ENCODE measurements at regions of chr17 and their contacts with region 1.

Region 1: GRCh38 chr17:40098846-40099618 is 1.4 kb downstream of the NR1D1 start:
- DNase-seq: peak; percentile 99
- ATAC-seq: peak; percentile 59
- H3K4me3 Mint-ChIP-seq: peak overlapping the region; percentile 88
- H3K27ac Mint-ChIP-seq: peak overlapping the region; percentile 90
- H3K4me1 Mint-ChIP-seq: peaks cover 86% of the 10 kb centered on the region
- H3K27me3 Mint-ChIP-seq: no peaks in the 10 kb centered on the region

Region 2: GRCh38 chr17:39461113-39461925 is 637.7 kb before region 1 on chr17 and contains the start of gene CDK12:
- CTCF ChIA-PET with region 1: no interaction called
- POLR2A ChIA-PET with region 1: no interaction called
- intact Hi-C with region 1: loop called in 1 of 2 experiments (anchors 1 kb)
- DNase-seq: peak; percentile 97
- ATAC-seq: peak; percentile 91
- H3K4me3 Mint-ChIP-seq: peak within 1 kb of the TSS; percentile 91
- H3K27ac Mint-ChIP-seq: peak within 1 kb of the TSS; percentile 94
- H3K4me1 Mint-ChIP-seq: peaks cover 22% of the 10 kb centered on the region
- H3K27me3 Mint-ChIP-seq: no peaks in the 10 kb centered on the region
- total RNA-seq, gene CDK12: 65.9 to 83.3 TPM

Region 3: DNA sequence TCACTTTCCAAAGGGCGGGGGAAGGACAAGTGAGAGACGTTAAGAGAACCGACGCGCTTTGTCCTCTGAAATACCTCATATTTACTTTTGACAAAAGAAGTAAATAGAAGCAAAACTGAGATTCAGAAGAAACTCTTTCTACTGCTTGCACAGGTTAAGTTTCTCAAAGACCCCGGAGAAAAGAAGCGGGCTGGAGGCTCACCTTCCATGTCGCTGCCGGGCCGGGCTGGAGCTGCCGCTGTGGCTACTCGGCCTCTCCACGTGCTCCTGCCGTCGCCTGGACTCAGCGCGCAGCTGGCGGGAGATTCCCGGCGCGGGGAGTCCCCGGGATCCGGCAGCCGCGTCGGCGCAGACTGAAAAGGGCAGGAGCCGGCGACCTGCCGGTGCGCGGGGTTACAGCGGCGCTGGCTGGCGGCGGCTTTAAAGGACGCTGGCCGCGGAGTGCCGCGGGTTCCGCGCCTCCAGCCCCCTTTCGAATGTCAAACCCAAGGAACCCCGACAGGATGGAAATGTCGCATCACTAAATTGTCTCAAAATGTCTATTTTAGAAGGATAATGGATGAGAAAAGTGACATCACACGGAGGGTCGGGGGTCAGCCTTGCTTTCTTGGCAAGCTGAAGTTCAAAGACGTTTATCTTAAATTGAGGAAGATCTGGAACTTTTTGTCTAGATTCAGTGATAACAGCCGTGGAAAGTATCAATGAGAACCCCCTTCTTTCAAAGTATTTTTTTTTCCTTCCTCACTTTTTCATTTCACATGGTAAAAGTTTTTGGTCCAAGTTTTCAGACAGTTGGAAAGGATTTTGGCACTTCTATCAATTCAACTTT is 234.9 kb before region 1 on chr17 and contains the start of gene IKZF3:
- CTCF ChIA-PET with region 1: no interaction called
- POLR2A ChIA-PET with region 1: no interaction called
- intact Hi-C with region 1: loop called in 1 of 2 experiments (anchors 1 kb)
- DNase-seq: peak; percentile 93
- ATAC-seq: peak; percentile 75
- H3K4me3 Mint-ChIP-seq: peak within 1 kb of the TSS; percentile 98
- H3K27ac Mint-ChIP-seq: peak within 1 kb of the TSS; percentile 97
- H3K4me1 Mint-ChIP-seq: peaks cover 67% of the 10 kb centered on the region
- H3K27me3 Mint-ChIP-seq: no peaks in the 10 kb centered on the region
- total RNA-seq, gene IKZF3: 37.6 to 50.4 TPM

Region 4: DNA sequence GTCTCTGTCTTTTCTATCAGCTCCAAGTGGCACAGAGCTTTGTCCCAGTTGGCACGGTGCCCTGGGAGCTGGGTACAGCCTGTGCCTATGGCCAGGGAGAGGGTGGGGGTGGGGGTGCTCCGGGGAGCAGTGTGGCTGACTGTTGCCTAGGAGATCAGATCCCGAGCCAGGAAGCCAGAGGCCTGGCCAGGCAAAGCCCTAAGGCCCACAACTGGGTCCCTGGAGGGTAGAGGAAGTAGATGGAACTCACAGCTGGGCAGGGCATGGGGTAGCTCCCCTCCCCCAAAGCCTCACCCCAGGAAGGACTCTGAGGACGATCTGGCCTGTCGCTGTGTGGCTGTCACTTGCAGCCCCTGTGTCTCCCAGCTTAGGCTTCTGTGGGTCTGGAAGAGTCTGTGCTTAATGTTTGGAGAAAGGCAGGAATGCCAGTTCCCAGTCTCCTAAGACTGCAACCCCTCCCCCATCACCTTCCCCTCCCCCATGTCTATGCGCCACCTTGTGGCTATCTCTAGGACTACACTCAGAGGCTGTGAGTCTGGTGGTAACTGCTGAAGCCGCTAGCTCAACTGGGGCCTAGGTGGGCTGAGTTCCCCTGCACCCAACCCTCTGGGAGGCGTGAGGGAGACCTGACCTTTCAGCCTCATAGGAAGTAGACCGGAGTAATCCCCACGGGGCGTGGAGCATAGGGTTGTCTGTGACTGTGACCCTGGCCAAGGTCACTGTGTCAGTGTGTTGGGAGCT is 23.7 kb before region 1 on chr17:
- CTCF ChIA-PET with region 1: interaction called, 13 read pairs
- POLR2A ChIA-PET with region 1: interaction called, 5 read pairs
- intact Hi-C with region 1: no loop called
- DNase-seq: peak; percentile 83
- ATAC-seq: peak; percentile 88
- H3K4me3 Mint-ChIP-seq: no peak overlapping the region
- H3K27ac Mint-ChIP-seq: peak overlapping the region; percentile 72
- H3K4me1 Mint-ChIP-seq: peaks cover 33% of the 10 kb centered on the region
- H3K27me3 Mint-ChIP-seq: no peaks in the 10 kb centered on the region

Region 5: GRCh38 chr17:40157973-40158372 is 58.9 kb after region 1 on chr17:
- CTCF ChIA-PET with region 1: no interaction called
- POLR2A ChIA-PET with region 1: interaction called, 3 read pairs
- intact Hi-C with region 1: loop called in 1 of 2 experiments (anchors 1 kb)
- DNase-seq: no peak
- ATAC-seq: no peak
- H3K4me3 Mint-ChIP-seq: no peak overlapping the region
- H3K27ac Mint-ChIP-seq: peak overlapping the region; percentile 24
- H3K4me1 Mint-ChIP-seq: peaks cover 35% of the 10 kb centered on the region
- H3K27me3 Mint-ChIP-seq: no peaks in the 10 kb centered on the region

Region 6: DNA sequence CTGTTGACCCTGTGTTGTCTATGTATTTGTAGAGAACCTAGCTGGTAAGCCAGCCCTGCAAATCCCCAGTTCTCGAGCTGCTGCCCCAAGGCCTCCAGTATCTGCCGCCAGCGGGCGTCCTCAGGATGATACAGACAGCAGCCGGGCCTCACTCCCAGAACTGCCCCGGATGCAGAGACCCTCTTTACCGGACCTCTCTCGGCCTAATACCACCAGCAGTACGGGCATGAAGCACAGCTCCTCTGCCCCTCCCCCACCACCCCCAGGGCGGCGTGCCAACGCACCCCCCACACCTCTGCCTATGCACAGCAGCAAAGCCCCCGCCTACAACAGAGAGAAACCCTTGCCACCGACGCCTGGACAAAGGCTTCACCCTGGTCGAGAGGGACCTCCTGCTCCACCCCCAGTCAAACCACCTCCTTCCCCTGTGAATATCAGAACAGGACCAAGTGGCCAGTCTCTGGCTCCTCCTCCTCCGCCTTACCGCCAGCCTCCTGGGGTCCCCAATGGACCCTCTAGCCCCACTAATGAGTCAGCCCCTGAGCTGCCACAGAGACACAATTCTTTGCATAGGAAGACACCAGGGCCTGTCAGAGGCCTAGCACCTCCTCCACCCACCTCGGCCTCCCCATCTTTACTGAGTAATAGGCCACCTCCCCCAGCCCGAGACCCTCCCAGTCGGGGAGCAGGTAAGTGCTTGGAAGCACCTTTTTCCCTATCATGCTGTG is 165.6 kb after region 1 on chr17:
- CTCF ChIA-PET with region 1: no interaction called
- POLR2A ChIA-PET with region 1: no interaction called
- intact Hi-C with region 1: no loop called
- DNase-seq: no peak
- ATAC-seq: no peak
- H3K4me3 Mint-ChIP-seq: no peak overlapping the region
- H3K27ac Mint-ChIP-seq: no peak overlapping the region
- H3K4me1 Mint-ChIP-seq: peaks cover 10% of the 10 kb centered on the region
- H3K27me3 Mint-ChIP-seq: no peaks in the 10 kb centered on the region

Region 7: DNA sequence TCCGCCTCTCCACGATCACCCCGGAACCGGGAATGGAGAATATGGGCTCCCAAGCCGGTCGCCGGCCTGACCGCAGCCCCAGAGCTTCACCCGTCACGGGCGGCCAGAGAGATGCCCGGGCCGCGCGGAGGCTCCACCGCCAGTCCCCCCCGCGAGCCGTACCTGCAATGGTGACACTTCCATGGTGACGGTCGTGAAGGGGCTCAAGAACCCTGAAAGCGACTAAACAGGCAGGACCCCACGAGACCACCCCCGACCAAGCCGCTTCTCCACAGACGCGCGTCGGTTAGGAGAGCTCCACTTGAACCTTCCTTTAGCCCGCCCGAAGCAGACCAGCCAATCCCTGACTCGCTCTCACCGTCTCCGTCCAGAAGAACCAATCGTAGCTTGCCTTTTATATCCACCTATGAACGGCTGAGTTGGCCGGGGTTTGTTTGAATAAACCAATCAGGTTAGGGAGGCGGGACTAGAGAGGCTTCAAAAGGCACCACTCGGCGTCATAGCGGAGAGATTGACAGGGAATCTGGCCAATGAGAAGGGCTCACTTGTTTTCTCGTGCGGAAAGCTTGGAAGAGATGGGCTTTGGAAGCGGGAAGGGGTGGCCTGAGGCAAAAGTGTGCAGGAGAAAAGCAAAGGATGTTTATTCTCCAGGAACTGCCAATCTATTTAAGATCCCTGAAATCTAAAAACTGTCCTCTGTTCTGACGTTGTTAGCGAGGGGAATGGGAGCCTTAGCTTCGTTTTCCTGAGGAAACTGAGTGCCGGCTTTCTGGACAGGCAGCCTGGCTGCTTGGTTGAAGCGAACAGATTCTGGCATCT is 318.8 kb after region 1 on chr17 and contains the start of gene TOP2A:
- CTCF ChIA-PET with region 1: no interaction called
- POLR2A ChIA-PET with region 1: no interaction called
- intact Hi-C with region 1: loop called in 1 of 2 experiments (anchors 5 kb)
- DNase-seq: peak; percentile 95
- ATAC-seq: peak; percentile 99
- H3K4me3 Mint-ChIP-seq: peak within 1 kb of the TSS; percentile 86
- H3K27ac Mint-ChIP-seq: peak within 1 kb of the TSS; percentile 89
- H3K4me1 Mint-ChIP-seq: peaks cover 24% of the 10 kb centered on the region
- H3K27me3 Mint-ChIP-seq: no peaks in the 10 kb centered on the region
- total RNA-seq, gene TOP2A: 245 to 322 TPM

Region 8: DNA sequence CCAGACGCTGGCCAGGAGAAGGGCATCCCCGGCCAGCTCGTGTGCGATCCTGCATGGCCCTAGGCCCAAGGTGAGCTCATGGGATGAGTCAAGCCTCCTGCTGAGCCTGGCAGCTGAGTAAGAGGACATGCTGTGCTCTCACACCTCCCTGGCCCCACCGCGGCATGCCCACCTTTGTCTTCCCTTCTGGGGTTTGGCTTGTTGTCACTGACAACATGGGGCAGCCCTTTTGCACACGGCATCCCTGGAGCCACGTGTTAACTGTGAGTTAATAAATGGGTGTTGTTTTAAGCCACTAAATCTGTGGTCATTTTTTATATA is 411.3 kb after region 1 on chr17:
- CTCF ChIA-PET with region 1: no interaction called
- POLR2A ChIA-PET with region 1: no interaction called
- intact Hi-C with region 1: no loop called
- DNase-seq: no peak
- ATAC-seq: no peak
- H3K4me3 Mint-ChIP-seq: no peak overlapping the region
- H3K27ac Mint-ChIP-seq: no peak overlapping the region
- H3K4me1 Mint-ChIP-seq: peaks cover 13% of the 10 kb centered on the region
- H3K27me3 Mint-ChIP-seq: peaks cover 2% of the 10 kb centered on the region